BJ (cell line): ENCODE measurements at regions of chr15 and their contacts with region 1.

Region 1: DNA sequence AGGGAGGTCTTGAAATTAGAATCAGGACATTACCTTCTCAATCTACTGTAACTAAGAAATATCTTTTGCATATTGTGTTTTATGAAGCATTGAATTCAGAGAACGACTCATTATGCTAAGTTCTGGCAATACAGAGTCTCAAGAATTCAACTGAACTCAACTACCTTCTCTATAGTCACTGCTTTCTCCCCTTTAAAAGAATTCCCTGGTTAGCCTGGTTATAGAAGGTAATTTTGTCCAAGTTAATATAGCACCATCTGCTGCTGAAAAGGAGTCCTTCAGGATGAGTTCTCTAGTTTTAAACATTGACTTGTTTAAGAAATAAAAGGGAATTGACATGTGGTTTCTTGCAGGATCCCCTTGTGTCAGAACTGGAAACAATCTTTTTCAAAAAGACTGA is 60.2 kb downstream of the IL16 start:
- DNase-seq: no peak
- H3K4me3 ChIP-seq: no peak overlapping the region
- H3K27me3 ChIP-seq: peaks cover 3% of the 10 kb centered on the region
- CTCF ChIP-seq: peak; percentile 62

Region 2: DNA sequence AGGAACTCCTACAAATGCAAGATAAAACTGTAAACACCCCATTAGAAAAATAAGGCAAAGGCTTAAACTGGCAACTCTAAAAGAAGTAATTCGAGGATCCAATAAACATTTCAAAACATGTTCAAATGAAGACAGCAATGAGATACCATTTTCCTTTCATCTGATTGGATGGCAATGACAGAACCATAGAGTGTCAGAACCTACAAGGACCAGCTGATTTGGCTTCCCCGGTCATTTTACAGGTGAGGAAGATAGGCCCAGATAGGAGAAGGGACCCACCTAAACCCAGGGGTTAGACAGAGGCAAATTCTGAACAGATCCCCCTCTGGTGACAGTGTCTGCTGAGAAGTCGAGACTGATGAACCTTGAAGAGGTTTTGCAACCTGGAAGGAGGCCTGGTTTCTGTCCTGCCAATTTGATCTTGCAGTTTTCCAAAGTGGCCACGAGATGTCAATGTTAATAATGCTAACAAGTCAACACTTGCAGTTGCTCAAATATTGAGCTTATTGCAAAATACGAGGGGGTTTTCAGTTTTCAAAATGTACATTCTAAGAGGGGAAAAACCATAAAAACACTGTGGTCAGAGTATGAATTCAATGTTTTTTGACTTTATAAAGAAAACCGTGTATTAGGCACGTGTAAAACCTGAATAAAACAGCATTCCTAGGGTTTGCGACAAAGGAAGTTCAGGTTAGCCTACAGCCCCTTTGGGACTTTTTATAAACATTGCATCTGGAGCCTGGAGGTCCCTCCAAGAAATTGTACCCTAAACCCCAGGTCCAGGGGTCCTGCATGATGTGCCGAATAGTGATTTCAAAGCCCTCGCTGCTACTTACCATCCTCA is 101.3 kb before region 1 on chr15:
- CTCF ChIA-PET with region 1: interaction called, 54 read pairs
- POLR2A ChIA-PET with region 1: no interaction called
- DNase-seq: no peak
- H3K4me3 ChIP-seq: no peak overlapping the region
- H3K27me3 ChIP-seq: no peaks in the 10 kb centered on the region; the same call in 1 of the 2 replicates
- CTCF ChIP-seq: peak; percentile 49

Region 3: GRCh38 chr15:81239190-81239589 is 17.7 kb before region 1 on chr15:
- CTCF ChIA-PET with region 1: no interaction called
- POLR2A ChIA-PET with region 1: no interaction called
- DNase-seq: no peak
- H3K4me3 ChIP-seq: no peak overlapping the region
- H3K27me3 ChIP-seq: no peaks in the 10 kb centered on the region
- CTCF ChIP-seq: no peak

Region 4: DNA sequence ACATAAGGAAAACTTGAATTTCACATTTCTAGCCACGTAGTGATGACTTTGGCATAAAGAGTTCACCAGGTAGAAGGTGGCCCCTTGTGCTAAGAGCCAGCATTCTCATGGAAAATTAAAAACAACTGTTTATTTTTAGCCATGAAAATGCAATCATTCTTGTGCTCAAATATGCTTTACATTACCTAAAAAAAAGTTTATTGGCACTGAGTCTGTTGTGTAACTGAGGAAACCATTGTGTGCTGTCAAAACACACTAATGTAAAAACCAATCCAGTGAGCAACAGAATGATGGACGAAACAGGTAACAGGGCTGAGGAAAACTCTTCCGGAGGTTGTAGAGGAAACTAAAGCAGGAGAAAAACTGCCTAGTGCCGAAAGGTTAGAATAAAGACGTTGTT is 404.1 kb after region 1 on chr15:
- CTCF ChIA-PET with region 1: no interaction called
- POLR2A ChIA-PET with region 1: no interaction called
- DNase-seq: no peak
- H3K4me3 ChIP-seq: no peak overlapping the region
- H3K27me3 ChIP-seq: no peaks in the 10 kb centered on the region
- CTCF ChIP-seq: no peak